PC-3 (cell line): ENCODE measurements at regions of chr3 and their contacts with region 1.

Region 1: GRCh38 chr3:131868203-131868602 is 166.6 kb downstream of the CPNE4 start:
- DNase-seq: no peak
- ATAC-seq: no peak
- H3K4me3 ChIP-seq: no peak overlapping the region
- H3K27ac ChIP-seq: no peak overlapping the region
- H3K4me1 ChIP-seq: no peaks in the 10 kb centered on the region
- H3K27me3 ChIP-seq: no peaks in the 10 kb centered on the region
- CTCF ChIP-seq: no peak

Region 2: DNA sequence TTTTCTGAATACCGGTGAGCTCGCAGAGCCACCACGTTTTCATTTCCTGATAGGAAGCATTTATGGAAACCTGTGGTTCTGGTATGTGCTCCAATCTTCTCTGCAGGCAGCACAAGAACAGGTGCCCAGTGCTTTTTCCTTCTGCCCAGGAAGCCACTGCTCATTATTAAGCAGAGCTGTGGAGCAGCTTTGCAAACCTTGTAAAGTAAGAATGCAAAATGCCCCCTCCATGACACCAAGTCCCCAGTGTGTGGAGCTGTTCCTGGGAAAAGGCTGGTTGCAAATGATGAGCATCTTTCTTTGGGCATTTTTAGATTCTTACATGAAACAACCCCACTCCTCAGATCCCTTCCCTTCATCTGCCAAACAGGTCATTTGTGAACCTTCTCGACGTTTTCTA is 299.7 kb before region 1 on chr3:
- CTCF ChIA-PET with region 1: no interaction called
- POLR2A ChIA-PET with region 1: no interaction called
- intact Hi-C with region 1: no loop called
- DNase-seq: peak; percentile 6
- ATAC-seq: no peak
- H3K4me3 ChIP-seq: no peak overlapping the region
- H3K27ac ChIP-seq: no peak overlapping the region
- H3K4me1 ChIP-seq: peaks cover 11% of the 10 kb centered on the region
- H3K27me3 ChIP-seq: no peaks in the 10 kb centered on the region
- CTCF ChIP-seq: peak; percentile 22; the same call in 1 of the 2 replicates

Region 3: GRCh38 chr3:131750256-131750655 is 117.9 kb before region 1 on chr3:
- CTCF ChIA-PET with region 1: no interaction called
- POLR2A ChIA-PET with region 1: no interaction called
- intact Hi-C with region 1: no loop called
- DNase-seq: no peak
- ATAC-seq: no peak
- H3K4me3 ChIP-seq: no peak overlapping the region
- H3K27ac ChIP-seq: no peak overlapping the region
- H3K4me1 ChIP-seq: no peaks in the 10 kb centered on the region
- H3K27me3 ChIP-seq: no peaks in the 10 kb centered on the region
- CTCF ChIP-seq: no peak

Region 4: GRCh38 chr3:131762981-131763564 is 105.1 kb before region 1 on chr3:
- CTCF ChIA-PET with region 1: no interaction called
- POLR2A ChIA-PET with region 1: interaction called, 15 read pairs
- intact Hi-C with region 1: no loop called
- DNase-seq: no peak
- ATAC-seq: no peak
- H3K4me3 ChIP-seq: no peak overlapping the region
- H3K27ac ChIP-seq: no peak overlapping the region
- H3K4me1 ChIP-seq: no peaks in the 10 kb centered on the region
- H3K27me3 ChIP-seq: no peaks in the 10 kb centered on the region
- CTCF ChIP-seq: no peak